ENCODE measurements at regions of chr11 and their contacts with region 1.

Region 1: GRCh38 chr11:74299015-74299414 is 12.4 kb downstream of the P4HA3 start:
- DNase-seq: no peak
- H3K4me3 ChIP-seq: no peak overlapping the region
- H3K4me3 Mint-ChIP-seq: no peak overlapping the region
- H3K27ac Mint-ChIP-seq: no peak overlapping the region
- H3K4me1 ChIP-seq: no peaks in the 10 kb centered on the region
- H3K4me1 Mint-ChIP-seq: no peaks in the 10 kb centered on the region
- H3K27me3 ChIP-seq: no peaks in the 10 kb centered on the region; the same call in 1 of the 2 replicates
- H3K27me3 Mint-ChIP-seq: peaks cover 9% of the 10 kb centered on the region
- CTCF ChIP-seq: no peak

Region 2: DNA sequence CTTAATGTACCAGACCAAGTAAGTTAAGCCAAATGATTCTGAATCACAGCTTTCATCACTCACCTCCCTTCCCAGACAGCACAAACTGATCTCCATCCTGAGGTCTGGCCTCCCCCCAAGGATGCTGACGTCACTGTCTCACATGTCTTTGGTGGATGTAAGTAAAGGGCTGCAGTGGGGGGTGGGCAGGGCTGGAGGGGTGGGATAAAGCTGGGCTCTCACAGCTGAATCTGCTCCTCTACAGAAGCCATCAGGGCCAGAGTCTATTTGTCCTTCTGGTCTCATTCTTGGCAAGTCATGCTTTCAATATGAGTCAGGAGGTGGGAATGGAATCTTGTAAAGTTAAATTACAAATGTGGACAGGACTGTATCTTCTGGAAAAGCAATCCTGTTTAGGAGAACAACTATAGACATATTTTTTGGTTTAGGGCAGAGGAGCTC is 20.3 kb before region 1 on chr11:
- CTCF ChIA-PET with region 1: no interaction called
- POLR2A ChIA-PET with region 1: interaction called, 10 read pairs
- intact Hi-C with region 1: no loop called
- DNase-seq: no peak
- H3K4me3 ChIP-seq: no peak overlapping the region
- H3K4me3 Mint-ChIP-seq: no peak overlapping the region
- H3K27ac Mint-ChIP-seq: no peak overlapping the region
- H3K4me1 ChIP-seq: peaks cover 5% of the 10 kb centered on the region; the same call in 1 of the 2 replicates
- H3K4me1 Mint-ChIP-seq: no peaks in the 10 kb centered on the region
- H3K27me3 ChIP-seq: no peaks in the 10 kb centered on the region
- H3K27me3 Mint-ChIP-seq: no peaks in the 10 kb centered on the region
- CTCF ChIP-seq: no peak